BJ (cell line): ENCODE measurements at regions of chr9 and their contacts with region 1.

Region 1: GRCh38 chr9:127742435-127743088 is 7.5 kb upstream of the TOR2A start:
- DNase-seq: peak; percentile 35
- H3K4me3 ChIP-seq: peak overlapping the region; percentile 34
- H3K27me3 ChIP-seq: peaks cover 4% of the 10 kb centered on the region
- CTCF ChIP-seq: no peak

Region 2: GRCh38 chr9:127723450-127723849 is 19.1 kb before region 1 on chr9:
- CTCF ChIA-PET with region 1: no interaction called
- POLR2A ChIA-PET with region 1: no interaction called
- DNase-seq: no peak
- H3K4me3 ChIP-seq: no peak overlapping the region
- H3K27me3 ChIP-seq: no peaks in the 10 kb centered on the region
- CTCF ChIP-seq: no peak

Region 3: DNA sequence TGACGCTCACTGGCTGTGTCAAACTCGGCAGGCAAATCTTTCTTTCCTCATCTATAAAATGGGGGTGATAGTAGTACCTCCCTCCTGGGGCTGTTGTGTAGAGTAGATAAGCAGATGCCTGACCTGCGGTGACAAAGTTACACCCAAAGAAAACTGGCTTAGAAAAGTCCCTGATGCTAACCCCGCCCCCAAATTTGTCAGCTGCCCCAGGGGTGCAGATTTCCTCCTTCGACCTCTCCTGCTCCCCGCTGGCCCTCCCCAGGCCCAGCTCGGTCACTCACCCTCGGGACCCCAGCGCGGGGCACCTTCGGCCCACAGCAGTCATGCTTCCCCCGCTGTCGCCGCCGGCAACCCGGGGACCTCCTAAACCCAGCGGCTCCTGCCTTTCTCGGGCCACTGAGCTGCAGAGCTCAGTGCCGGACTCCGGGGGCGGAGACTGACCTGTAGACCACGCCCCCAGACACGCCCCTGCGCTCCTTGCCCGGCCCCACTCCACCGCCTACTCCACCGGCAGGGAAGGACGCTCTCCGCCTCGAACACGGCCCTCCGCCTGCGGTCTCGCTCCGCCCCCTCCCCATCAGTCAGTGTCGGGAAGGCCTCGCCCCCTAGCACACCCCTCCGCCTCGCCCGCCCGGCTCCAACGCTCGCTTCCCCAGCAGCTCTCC is 28.5 kb after region 1 on chr9:
- CTCF ChIA-PET with region 1: interaction called, 3 read pairs
- POLR2A ChIA-PET with region 1: interaction called, 14 read pairs
- DNase-seq: peak; percentile 82
- H3K4me3 ChIP-seq: peak overlapping the region; percentile 42
- H3K27me3 ChIP-seq: peaks cover 6% of the 10 kb centered on the region; the same call in 1 of the 2 replicates
- CTCF ChIP-seq: no peak

Region 4: DNA sequence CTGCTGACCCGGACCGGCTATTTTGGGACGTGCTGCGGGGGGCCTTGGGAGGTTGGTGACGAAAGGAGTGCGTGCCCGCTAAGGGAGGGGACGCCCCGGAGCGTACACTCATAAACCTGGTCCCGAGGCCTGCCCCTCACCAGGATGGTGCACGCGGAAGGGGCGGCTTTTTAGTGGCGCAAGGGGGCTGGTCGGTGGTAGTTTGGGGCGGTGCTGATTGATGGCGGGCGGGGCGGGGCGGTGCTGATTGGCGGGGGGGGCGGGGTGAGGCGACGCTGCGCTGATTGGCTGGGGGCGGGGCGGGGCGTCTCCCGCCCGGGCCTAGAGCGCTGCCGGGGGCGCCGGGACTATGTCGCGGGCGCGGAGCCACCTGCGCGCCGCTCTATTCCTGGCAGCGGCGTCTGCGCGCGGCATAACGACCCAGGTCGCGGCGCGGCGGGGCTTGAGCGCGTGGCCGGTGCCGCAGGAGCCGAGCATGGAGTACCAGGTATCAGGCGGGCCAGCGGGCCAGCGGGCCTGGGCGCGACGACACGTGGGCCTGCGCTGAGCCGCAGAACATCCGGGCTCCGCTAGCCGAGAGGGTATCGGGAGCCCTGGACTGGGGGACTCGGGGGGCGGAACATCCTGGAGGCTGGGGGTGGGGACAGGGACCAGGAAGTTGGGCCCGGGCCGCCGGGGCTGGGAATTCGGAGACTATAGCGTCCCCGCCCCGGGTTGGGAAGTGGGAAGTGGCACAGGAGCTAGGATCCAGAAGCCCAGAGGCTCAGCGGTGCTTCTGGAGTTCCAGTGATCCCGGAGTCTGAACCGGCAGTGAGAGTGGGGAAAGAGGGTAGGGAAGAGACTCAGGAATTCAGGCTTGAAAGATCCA is 60.2 kb after region 1 on chr9 and contains the start of gene FPGS:
- CTCF ChIA-PET with region 1: no interaction called
- POLR2A ChIA-PET with region 1: interaction called, 11 read pairs
- DNase-seq: peak; percentile 33
- H3K4me3 ChIP-seq: peak within 1 kb of the TSS; percentile 44
- H3K27me3 ChIP-seq: no peaks in the 10 kb centered on the region
- CTCF ChIP-seq: no peak
- polyA plus RNA-seq, gene FPGS: 27.9 and 61.9 TPM in 2 replicates

Region 5: DNA sequence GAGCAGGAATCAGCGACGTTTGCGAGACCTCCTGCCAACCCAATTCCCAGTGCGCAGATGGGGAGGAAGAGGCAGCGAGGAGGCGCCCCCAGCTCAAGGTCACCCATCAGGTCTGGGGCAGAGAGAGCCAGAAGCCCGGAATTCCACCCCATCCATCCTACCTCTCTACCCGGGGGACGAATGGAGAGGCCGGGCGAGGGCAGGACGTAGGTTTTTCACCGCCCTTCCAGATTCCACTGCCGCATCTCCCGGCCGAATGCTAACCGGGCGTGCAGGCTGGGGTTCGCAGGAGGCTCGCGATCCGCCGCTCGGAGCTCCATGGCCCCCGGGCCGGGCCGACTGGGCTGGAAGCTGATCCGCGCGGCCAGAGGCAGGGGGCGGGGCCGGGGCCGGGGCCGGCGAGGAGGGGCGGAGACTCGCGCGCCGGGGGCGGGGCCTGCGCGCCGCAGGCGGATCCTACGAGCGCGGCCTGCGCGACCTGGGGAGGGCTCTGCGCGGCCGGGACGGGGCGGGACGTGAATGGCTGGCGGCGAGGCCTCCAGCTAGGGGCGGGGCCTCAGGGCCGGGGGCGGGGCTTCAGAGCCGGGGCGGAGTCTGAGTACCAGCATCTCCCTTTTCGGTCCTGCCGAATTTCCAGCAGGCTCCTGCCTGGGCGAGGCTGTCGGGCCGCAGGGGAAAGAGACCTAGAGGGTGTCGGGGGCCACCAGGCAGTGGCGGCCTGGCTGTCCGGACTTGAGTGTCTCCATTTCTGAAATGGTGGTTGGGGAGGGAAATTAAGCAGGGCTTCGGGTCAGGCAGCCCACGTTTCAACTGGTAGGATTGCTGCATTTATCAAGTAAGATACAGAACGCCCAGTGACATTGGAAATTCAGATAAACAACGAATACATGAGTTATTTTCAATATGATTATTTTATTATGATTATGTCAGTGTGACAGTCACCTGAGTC is 174.4 kb after region 1 on chr9 and contains the start of gene ST6GALNAC4:
- CTCF ChIA-PET with region 1: interaction called, 37 read pairs
- POLR2A ChIA-PET with region 1: no interaction called
- DNase-seq: no peak
- H3K4me3 ChIP-seq: peak within 1 kb of the TSS; percentile 51
- H3K27me3 ChIP-seq: no peaks in the 10 kb centered on the region
- CTCF ChIP-seq: peak; percentile 5; the same call in 1 of the 2 replicates
- polyA plus RNA-seq, gene ST6GALNAC4: 21.4 and 35.5 TPM in 2 replicates